Activated CD4-positive, alpha-beta memory T cell treated with anti-CD3 and anti-CD28 coated beads for 36 hours (primary cell): ENCODE measurements at regions of chr11 and their contacts with region 1.

Region 1: GRCh38 chr11:6746086-6746618 is 25.6 kb downstream of the OR2AG2 start:
- DNase-seq: peak; percentile 52
- H3K4me3 Mint-ChIP-seq: no peak overlapping the region
- H3K27ac Mint-ChIP-seq: no peak overlapping the region
- H3K4me1 Mint-ChIP-seq: peaks cover 32% of the 10 kb centered on the region
- H3K27me3 Mint-ChIP-seq: no peaks in the 10 kb centered on the region

Region 2: DNA sequence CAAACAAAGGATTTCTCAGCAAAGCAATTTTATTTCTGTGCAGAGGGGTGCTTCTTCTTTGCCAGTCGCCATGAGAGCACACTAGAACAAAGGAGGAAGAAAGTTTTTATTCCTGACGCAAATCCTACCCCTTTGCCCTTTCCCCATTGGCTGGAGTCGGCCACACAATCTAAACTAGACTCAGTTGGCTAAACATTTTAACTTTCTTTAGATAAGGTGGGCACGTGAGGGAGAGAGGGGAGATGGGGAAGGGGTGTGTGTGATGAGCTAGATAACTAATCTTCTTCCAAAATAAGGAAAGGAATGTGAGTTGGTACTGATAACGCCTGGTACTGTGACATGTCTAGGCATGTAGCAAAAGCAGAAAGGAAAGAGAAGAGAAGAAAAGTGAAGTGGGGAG is 1055.9 kb before region 1 on chr11:
- CTCF ChIA-PET with region 1: no interaction called
- POLR2A ChIA-PET with region 1: interaction called, 5 read pairs
- intact Hi-C with region 1: loop called (anchors 5 kb)
- DNase-seq: no peak
- H3K4me3 Mint-ChIP-seq: peak overlapping the region; percentile 89
- H3K27ac Mint-ChIP-seq: peak overlapping the region; percentile 92
- H3K4me1 Mint-ChIP-seq: peaks cover 46% of the 10 kb centered on the region
- H3K27me3 Mint-ChIP-seq: no peaks in the 10 kb centered on the region

Region 3: GRCh38 chr11:6419009-6419631 is 327.0 kb before region 1 on chr11 and contains the start of gene APBB1:
- CTCF ChIA-PET with region 1: no interaction called
- POLR2A ChIA-PET with region 1: no interaction called
- intact Hi-C with region 1: no loop called
- DNase-seq: peak; percentile 78
- H3K4me3 Mint-ChIP-seq: peak within 1 kb of the TSS; percentile 73
- H3K27ac Mint-ChIP-seq: peak within 1 kb of the TSS; percentile 61
- H3K4me1 Mint-ChIP-seq: peaks cover 8% of the 10 kb centered on the region
- H3K27me3 Mint-ChIP-seq: peaks cover 5% of the 10 kb centered on the region
- total RNA-seq, gene APBB1: 51.6 to 55.3 TPM

Region 4: GRCh38 chr11:6693342-6694228 is 52.6 kb before region 1 on chr11:
- CTCF ChIA-PET with region 1: no interaction called
- POLR2A ChIA-PET with region 1: interaction called, 10 read pairs
- intact Hi-C with region 1: no loop called
- DNase-seq: peak; percentile 83
- H3K4me3 Mint-ChIP-seq: peak overlapping the region; percentile 4
- H3K27ac Mint-ChIP-seq: peak overlapping the region; percentile 72
- H3K4me1 Mint-ChIP-seq: peaks cover 42% of the 10 kb centered on the region
- H3K27me3 Mint-ChIP-seq: no peaks in the 10 kb centered on the region

Region 5: DNA sequence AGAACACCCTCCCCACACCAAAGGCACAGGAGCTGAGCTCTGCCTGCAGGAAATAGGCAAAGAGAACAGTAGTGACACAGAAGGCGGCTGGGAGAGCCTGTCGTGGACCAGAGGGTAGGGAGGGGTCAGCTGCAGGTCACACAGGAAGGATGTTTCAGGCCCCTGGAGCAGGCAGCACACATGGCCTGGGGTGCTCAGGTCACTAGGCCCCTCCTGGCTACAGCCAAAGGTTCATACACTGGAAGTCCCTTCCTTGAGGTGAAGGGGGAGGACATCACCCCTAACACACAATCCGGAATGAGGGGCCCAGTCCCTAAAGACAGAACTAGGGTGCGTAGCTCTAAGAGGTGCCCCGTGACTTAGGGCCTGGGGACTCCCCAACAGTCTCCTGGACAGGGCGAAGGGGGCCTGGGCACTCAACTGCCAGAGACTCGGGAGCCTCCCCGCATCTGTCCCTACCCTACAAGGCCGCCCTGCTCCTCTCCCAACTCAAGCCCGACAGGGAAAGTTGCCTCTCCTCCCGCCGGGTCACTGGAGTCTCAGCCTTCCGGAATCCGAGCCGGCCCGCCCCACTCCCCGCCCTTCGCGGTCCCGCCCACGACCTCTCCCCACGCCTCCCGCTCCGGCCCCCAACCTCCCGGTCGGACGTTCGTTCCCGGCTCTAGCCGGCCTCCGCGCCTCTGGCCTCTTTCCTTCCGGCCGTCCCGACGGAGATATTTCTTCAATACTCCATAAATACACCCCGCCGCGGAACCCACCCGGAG is 927.0 kb after region 1 on chr11 and contains the start of gene CYB5R2:
- CTCF ChIA-PET with region 1: no interaction called
- POLR2A ChIA-PET with region 1: no interaction called
- intact Hi-C with region 1: loop called (anchors 5 kb)
- DNase-seq: peak; percentile 38
- H3K4me3 Mint-ChIP-seq: peak within 1 kb of the TSS; percentile 63
- H3K27ac Mint-ChIP-seq: no peak within 1 kb of the TSS
- H3K4me1 Mint-ChIP-seq: peaks cover 31% of the 10 kb centered on the region
- H3K27me3 Mint-ChIP-seq: peaks cover 33% of the 10 kb centered on the region
- total RNA-seq, gene CYB5R2: 4.4 to 4.7 TPM